ENCODE measurements at regions of chr2 and their contacts with region 1.

Region 1: DNA sequence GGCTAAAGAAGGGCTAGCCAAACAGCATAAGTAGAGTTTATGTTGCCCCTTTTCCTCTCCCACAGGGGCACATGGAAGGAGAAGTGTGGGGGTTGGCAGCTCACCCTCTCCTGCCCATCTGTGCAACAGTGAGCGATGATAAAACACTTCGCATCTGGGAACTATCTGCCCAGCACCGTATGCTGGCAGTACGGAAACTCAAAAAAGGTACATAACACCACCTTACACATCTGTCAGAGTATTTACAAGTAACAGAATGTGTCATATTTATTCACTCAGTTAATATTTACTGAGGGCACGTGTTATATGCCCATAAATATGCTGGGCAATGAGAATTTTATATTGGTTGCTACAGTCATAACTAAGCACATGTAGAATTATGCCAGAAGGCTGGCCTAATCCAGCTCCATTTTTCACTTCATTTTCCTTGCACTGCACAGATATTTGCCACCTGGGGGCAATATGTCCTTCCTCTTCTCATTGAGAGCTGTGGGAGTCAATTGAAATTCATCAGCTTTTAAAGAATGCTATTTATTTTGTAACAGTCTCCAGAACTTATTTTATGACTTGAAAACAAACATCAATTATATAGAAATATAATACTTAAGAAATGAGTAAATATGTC is 150.6 kb downstream of the RTN4 start:
- DNase-seq: no peak
- H3K4me3 Mint-ChIP-seq: no peak overlapping the region
- H3K27ac Mint-ChIP-seq: no peak overlapping the region
- H3K4me1 Mint-ChIP-seq: peaks cover 28% of the 10 kb centered on the region
- H3K27me3 Mint-ChIP-seq: peaks cover 4% of the 10 kb centered on the region

Region 2: GRCh38 chr2:55168221-55169154 is 268.8 kb after region 1 on chr2:
- CTCF ChIA-PET with region 1: interaction called, 23 read pairs
- DNase-seq: peak; percentile 57
- H3K4me3 Mint-ChIP-seq: no peak overlapping the region
- H3K27ac Mint-ChIP-seq: no peak overlapping the region
- H3K4me1 Mint-ChIP-seq: no peaks in the 10 kb centered on the region
- H3K27me3 Mint-ChIP-seq: no peaks in the 10 kb centered on the region

Region 3: DNA sequence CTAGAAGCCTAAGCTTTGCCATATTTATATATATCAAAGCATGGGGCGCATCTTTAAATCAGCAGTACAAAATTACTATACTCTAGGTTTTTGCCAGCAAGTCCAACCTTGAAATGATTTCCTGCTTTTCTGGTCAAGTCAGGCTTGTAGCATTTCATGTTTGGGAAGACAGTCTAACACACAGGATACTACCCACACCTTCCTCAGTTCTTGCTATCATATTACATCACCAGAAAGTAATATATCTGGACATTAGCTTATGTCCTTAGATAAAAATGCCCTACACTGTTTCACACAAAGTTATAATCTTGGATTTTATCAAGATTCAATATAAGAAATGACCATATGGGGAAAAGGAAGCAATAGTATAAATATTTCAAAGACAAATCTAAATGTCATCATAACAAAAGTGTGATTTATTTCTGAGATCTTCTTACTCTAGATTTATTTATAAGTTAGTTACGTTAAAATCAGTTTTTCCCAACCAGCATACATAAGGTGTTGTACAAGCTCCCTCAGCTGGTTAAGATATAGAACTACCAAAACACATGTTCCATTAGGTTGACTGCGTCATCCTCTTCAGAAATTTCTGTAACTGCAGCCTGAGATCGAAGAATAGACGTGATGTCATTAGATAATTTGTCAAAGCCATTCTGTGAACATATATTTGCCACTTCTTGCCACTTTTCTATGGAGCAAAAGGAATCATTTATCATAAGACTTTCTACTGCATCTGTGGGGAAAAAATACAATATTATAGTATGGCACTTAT is 275.8 kb after region 1 on chr2:
- CTCF ChIA-PET with region 1: interaction called, 23 read pairs
- DNase-seq: no peak
- H3K4me3 Mint-ChIP-seq: no peak overlapping the region
- H3K27ac Mint-ChIP-seq: peak overlapping the region; percentile 2
- H3K4me1 Mint-ChIP-seq: no peaks in the 10 kb centered on the region
- H3K27me3 Mint-ChIP-seq: no peaks in the 10 kb centered on the region